ENCODE measurements at regions of chr5 and their contacts with region 1.

Region 1: GRCh38 chr5:126676195-126676624 is 75.5 kb downstream of the PHAX start:
- DNase-seq: no peak
- H3K4me3 ChIP-seq: no peak overlapping the region
- H3K27ac ChIP-seq: no peak overlapping the region
- H3K4me1 ChIP-seq: peaks cover 0 to 5% (median 3%) of the 10 kb centered on the region in 6 donors
- H3K27me3 ChIP-seq: no peaks in the 10 kb centered on the region
- CTCF ChIP-seq: peak; percentile 72 to 89 (median 81)
- POLR2A ChIP-seq: no peak

Region 2: DNA sequence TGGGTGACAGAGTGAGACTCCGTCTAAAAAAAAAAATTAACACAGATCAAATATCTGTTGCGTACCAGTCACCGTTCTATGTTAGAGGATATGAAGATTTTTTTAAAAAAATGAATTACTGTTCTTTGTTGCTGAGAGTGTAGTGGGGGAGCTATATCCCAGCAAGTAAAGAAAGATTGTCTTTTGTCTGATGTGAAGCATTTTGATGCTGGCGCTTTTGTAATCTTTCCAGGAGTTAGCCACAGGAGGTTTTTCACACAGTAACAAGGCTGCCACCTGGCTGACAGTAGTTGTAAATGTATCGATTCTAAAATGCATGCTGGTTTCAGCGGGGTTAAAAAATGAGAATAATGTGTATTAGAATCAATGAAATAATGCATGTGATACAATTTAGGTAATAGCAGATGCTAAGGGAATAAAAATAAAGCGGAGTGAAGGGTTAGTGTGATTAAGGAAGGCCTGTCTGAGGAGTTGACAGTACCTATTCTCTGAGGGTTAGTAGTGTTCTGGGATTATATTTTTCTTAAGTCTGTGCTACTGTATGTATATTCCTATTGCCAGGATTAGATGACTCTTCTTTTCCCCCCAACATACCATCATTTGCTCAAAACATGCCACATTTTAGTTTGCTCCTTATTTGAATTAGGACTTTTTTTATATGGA is 104.1 kb after region 1 on chr5:
- intact Hi-C with region 1: loop called (anchors 5 kb)
- DNase-seq: no peak
- H3K4me3 ChIP-seq: peak overlapping the region in 2 of 8 donors; percentile 6 to 88
- H3K27ac ChIP-seq: peak overlapping the region in 2 of 8 donors; percentile 95 to 98
- H3K4me1 ChIP-seq: peaks cover 12 to 46% (median 36%) of the 10 kb centered on the region in 6 donors
- H3K27me3 ChIP-seq: no peaks in the 10 kb centered on the region
- CTCF ChIP-seq: peak; percentile 23 to 73 (median 65)
- POLR2A ChIP-seq: no peak

Region 3: DNA sequence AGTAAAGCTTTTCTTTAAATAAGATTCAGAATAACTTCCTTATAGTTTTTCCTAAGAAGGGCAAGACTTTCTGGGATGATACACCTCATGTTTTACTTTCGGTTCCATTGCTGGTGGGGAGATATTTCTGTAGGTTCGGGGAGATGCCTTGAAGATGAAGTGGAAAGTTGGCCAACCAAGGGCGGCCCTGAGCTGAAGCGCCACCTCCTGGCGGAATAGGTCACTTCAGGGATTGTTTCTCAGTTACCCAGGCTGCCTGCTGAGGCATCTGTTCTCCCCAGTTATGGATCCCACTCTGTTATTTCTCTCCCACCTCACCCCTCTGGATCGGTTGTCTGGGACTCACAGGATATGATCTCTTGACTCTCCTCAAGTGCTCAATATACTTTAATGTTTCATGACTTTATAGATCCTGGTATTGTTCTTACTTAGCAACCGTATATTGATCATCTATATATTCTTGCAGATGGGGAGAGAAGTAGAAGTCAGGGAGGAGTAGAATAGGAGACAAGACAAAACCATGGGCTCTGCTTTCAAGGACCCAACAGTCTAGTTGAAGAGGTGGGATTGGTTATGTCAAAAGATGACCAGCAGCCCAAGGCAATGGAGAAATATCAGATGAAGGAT is 637.8 kb after region 1 on chr5:
- intact Hi-C with region 1: loop called (anchors 5 kb)
- DNase-seq: peak; percentile 87
- H3K4me3 ChIP-seq: no peak overlapping the region
- H3K27ac ChIP-seq: no peak overlapping the region
- H3K4me1 ChIP-seq: peaks cover 0 to 11% (median 0%) of the 10 kb centered on the region in 6 donors
- H3K27me3 ChIP-seq: no peaks in the 10 kb centered on the region
- CTCF ChIP-seq: peak; percentile 26 to 82 (median 71)
- POLR2A ChIP-seq: no peak